CD14-positive monocyte (primary cell): ENCODE measurements at regions of chr11 and their contacts with region 1.

Region 1: GRCh38 chr11:8192016-8192895 is 23.4 kb upstream of the RIC3 start:
- DNase-seq: peak; percentile 51 to 67 (median 65)
- H3K4me3 ChIP-seq: no peak overlapping the region
- H3K4me3 Mint-ChIP-seq: no peak overlapping the region
- H3K27ac ChIP-seq: no peak overlapping the region
- H3K27ac Mint-ChIP-seq: peak overlapping the region in 1 of 7 donors; percentile 62
- H3K4me1 ChIP-seq: peaks cover 38% of the 10 kb centered on the region in 2 donors
- H3K4me1 Mint-ChIP-seq: peaks cover 38% of the 10 kb centered on the region
- H3K27me3 ChIP-seq: no peaks in the 10 kb centered on the region
- H3K27me3 Mint-ChIP-seq: peaks cover 1 to 2% (median 2%) of the 10 kb centered on the region in 3 donors
- CTCF ChIP-seq: peak; percentile 88

Region 2: GRCh38 chr11:8209208-8209807 is 17.1 kb after region 1 on chr11:
- intact Hi-C with region 1: loop called (anchors 2 kb)
- DNase-seq: peak; percentile 48 to 68 (median 66)
- H3K4me3 ChIP-seq: no peak overlapping the region
- H3K4me3 Mint-ChIP-seq: no peak overlapping the region
- H3K27ac ChIP-seq: no peak overlapping the region
- H3K27ac Mint-ChIP-seq: peak overlapping the region in 2 of 7 donors; percentile 23 to 25
- H3K4me1 ChIP-seq: peaks cover 44 to 49% of the 10 kb centered on the region in 2 donors
- H3K4me1 Mint-ChIP-seq: peaks cover 53% of the 10 kb centered on the region
- H3K27me3 ChIP-seq: no peaks in the 10 kb centered on the region
- H3K27me3 Mint-ChIP-seq: peaks cover 0 to 6% (median 5%) of the 10 kb centered on the region in 3 donors
- CTCF ChIP-seq: peak; percentile 97